BJ (cell line): ENCODE measurements at regions of chr1 and their contacts with region 1.

Region 1: DNA sequence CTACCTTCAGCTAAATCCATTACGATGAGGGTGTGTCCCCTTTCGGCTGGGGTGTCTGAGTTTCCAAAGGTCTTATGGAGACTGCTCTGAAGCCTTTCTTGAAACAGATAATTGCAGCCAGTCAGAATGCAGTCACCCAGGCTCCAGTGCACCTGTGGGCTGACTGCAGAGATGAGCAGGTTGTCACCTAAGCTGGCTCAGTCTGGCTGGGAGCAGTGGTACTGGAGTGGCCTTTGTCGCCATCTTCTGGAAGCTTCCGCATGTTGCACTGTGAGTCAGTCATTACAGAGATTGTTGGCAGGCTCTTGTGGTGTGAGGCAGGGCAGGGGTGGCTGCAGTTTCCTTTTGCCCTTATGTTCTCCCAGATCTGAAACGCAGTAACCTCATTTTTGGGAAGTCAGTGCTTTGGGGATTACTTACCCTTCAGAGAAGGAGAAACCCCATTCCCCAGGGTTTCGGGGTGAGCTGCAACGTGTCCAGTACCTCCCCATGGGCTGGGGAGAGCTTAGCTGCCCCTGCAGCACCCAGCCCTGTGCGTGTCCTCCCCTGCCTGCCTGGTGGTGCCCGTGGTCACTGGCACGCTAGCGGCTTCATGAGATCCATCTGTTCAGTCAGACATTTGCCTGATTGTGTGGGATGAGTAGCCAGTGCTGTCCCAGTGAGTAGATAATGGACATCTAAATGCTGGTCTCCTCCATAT is 48.0 kb downstream of the SMYD2 start:
- DNase-seq: no peak
- H3K4me3 ChIP-seq: no peak overlapping the region
- H3K27me3 ChIP-seq: no peaks in the 10 kb centered on the region
- CTCF ChIP-seq: peak; percentile 87

Region 2: DNA sequence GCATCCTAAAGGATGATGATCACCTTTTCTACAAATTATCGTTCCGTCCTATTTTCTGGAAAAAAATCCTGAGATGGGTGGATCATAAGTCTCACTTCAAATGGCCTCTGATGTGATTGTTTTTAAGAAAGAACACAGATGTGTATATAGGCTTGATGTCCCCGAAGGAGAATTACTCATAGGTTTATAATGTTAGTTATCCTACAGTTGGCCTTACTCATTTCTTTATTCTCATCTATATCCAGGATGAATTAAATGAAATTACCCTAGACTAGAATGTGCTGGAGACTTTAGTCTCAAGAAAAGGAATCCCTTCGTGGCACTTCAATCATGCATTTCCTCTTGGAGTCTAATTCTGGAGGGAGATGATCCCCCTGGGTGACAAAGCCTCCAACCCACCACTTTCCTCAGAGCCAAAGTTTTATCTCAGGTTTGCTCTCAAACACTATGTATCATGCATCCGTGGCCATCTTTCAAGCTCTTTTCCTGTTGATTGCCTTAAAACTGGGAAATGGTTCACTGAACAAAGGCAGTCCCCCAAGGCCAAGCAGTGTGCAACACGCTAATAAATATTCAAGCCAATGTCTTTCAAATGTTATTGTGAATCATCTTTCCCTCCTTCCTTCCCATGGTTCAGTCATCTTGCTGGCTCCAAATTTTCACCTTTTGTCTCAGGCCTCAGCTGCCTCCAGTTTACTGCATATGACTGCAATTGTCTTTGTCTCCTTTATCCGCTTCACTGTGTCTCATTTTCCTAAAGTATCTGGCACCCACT is 80.4 kb before region 1 on chr1:
- CTCF ChIA-PET with region 1: interaction called, 11 read pairs
- POLR2A ChIA-PET with region 1: no interaction called
- DNase-seq: no peak
- H3K4me3 ChIP-seq: no peak overlapping the region
- H3K27me3 ChIP-seq: no peaks in the 10 kb centered on the region; the same call in 1 of the 2 replicates
- CTCF ChIP-seq: no peak

Region 3: GRCh38 chr1:214276786-214277345 is 52.1 kb before region 1 on chr1:
- CTCF ChIA-PET with region 1: interaction called, 29 read pairs
- POLR2A ChIA-PET with region 1: interaction called, 3 read pairs
- DNase-seq: no peak
- H3K4me3 ChIP-seq: no peak overlapping the region
- H3K27me3 ChIP-seq: peaks cover 5% of the 10 kb centered on the region
- CTCF ChIP-seq: no peak

Region 4: GRCh38 chr1:214349781-214350180 is 20.9 kb after region 1 on chr1:
- CTCF ChIA-PET with region 1: interaction called, 12 read pairs
- POLR2A ChIA-PET with region 1: no interaction called
- DNase-seq: no peak
- H3K4me3 ChIP-seq: no peak overlapping the region
- H3K27me3 ChIP-seq: no peaks in the 10 kb centered on the region
- CTCF ChIP-seq: no peak

Region 5: DNA sequence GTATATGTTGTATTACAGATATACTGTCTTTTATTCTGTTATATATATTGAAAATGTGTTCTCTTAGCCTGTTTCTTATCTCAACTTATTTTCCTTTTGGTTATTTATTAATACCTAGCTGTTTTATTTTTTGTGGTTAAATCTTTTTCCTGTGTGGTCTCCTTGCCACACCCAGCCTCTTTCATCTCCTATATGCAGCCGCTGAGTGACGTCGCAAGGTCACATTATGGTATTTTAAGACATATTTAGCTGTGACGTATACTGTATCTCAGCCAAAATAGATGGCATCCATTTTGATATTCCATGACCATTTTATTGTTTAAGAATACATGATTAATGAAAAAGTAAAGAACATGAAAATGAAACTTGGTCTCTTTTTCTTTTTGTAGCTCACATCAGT is 303.2 kb after region 1 on chr1:
- CTCF ChIA-PET with region 1: interaction called, 83 read pairs
- POLR2A ChIA-PET with region 1: no interaction called
- DNase-seq: no peak
- H3K4me3 ChIP-seq: no peak overlapping the region
- H3K27me3 ChIP-seq: no peaks in the 10 kb centered on the region
- CTCF ChIP-seq: no peak

Region 6: GRCh38 chr1:214808845-214809460 is 480.0 kb after region 1 on chr1:
- CTCF ChIA-PET with region 1: no interaction called
- POLR2A ChIA-PET with region 1: no interaction called
- DNase-seq: no peak
- H3K4me3 ChIP-seq: no peak overlapping the region
- H3K27me3 ChIP-seq: no peaks in the 10 kb centered on the region
- CTCF ChIP-seq: peak; percentile 42; the same call in 1 of the 2 replicates